Cardiac septum (tissue), 1 donor: ENCODE measurements at regions of chr10 and their contacts with region 1.

Region 1: GRCh38 chr10:130190055-130190736 is 54.0 kb downstream of the GLRX3 start:
- DNase-seq: peak; percentile 94

Region 2: GRCh38 chr10:130352291-130352645 is 162.1 kb after region 1 on chr10:
- intact Hi-C with region 1: loop called (anchors 10 kb)
- DNase-seq: peak; percentile 71

Region 3: GRCh38 chr10:131788386-131788785 is 1598.2 kb after region 1 on chr10:
- intact Hi-C with region 1: loop called (anchors 2 kb)
- DNase-seq: no peak

Region 4: DNA sequence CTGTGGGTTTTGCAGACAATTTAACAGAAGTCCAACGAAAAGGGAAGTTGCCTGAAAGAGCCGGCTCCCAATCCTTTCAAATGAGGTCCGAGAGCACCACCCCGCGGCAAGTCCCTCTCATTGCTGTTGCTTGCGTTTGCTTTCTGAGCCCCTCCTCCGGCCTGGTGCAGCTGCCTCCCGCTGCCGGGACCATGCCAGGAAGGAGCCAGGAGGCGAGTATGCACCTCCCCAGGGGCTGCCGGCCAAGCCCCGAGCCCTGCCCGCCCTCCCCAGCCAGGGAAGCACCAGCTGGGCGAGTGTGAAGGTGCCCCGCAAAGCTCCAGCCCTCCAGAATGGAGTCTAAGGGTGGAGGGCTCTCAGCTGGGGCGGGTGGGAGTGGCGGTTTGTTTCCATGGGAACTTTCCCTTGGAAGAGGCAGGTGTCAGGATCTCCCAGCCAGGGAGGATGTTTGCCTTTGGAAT is 1684.8 kb after region 1 on chr10:
- intact Hi-C with region 1: loop called (anchors 2 kb)
- DNase-seq: no peak